WTC11 (cell line): ENCODE measurements at regions of chr16 and their contacts with region 1.

Region 1: DNA sequence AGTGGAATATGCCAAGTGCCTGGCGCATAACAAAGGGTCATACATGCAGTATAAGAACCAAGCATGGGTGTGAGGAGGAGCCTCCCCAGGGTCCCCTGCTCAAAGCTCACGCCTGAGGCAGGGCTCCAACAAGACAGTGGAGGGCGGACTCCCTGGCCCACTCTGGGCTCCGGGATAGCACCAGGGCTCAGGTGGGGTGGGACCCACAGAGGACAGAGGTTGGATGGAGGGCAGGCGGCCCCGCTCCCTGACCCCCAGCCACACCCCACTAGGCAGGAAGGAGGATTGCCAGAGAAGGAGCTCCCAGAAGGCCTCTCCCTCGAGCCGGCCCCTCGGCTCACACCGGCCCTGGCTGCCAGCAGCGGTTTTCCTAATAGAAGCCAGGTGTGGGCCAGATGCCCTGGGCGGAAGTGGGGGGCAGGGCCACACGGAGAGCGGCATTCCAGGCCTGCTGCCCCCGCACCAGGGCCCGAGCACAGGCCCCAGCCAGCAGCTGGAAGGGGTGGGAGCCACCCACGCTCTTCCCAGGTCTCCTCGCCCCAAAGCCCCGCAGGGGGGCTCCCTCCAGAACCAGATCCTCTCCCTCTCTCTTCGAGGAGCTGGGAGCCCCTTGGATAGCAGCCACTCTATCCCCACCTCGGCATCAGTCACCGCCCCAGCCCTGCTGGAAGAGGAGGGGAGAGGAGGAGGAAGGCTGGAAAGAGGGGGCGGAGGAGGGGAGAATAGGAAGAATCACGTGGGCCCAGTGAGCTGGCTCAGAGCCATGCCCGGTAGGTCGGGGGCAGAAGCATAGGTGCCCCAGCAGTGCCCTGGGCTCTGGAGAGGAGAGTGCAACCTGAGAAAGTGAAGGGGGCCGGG is 21.0 kb downstream of the VASN start:
- DNase-seq: peak; percentile 81
- ATAC-seq: peak; percentile 76
- H3K4me3 Mint-ChIP-seq: peak overlapping the region; percentile 20; the same call in 1 of the 2 replicates
- H3K27ac Mint-ChIP-seq: peak overlapping the region; percentile 92
- H3K4me1 Mint-ChIP-seq: peaks cover 48% of the 10 kb centered on the region
- H3K27me3 Mint-ChIP-seq: no peaks in the 10 kb centered on the region
- CTCF ChIP-seq: no peak

Region 2: GRCh38 chr16:4371357-4372000 is 21.1 kb before region 1 on chr16 and contains the start of gene VASN:
- CTCF ChIA-PET with region 1: interaction called, 65 read pairs
- POLR2A ChIA-PET with region 1: interaction called, 16 read pairs
- DNase-seq: peak; percentile 83
- ATAC-seq: peak; percentile 77
- H3K4me3 Mint-ChIP-seq: peak within 1 kb of the TSS; percentile 83
- H3K27ac Mint-ChIP-seq: no peak within 1 kb of the TSS
- H3K4me1 Mint-ChIP-seq: peaks cover 25% of the 10 kb centered on the region
- H3K27me3 Mint-ChIP-seq: no peaks in the 10 kb centered on the region
- CTCF ChIP-seq: no peak
- total RNA-seq, gene VASN: 8.0 to 9.1 TPM (median 8.3 TPM) in 3 replicates

Region 3: DNA sequence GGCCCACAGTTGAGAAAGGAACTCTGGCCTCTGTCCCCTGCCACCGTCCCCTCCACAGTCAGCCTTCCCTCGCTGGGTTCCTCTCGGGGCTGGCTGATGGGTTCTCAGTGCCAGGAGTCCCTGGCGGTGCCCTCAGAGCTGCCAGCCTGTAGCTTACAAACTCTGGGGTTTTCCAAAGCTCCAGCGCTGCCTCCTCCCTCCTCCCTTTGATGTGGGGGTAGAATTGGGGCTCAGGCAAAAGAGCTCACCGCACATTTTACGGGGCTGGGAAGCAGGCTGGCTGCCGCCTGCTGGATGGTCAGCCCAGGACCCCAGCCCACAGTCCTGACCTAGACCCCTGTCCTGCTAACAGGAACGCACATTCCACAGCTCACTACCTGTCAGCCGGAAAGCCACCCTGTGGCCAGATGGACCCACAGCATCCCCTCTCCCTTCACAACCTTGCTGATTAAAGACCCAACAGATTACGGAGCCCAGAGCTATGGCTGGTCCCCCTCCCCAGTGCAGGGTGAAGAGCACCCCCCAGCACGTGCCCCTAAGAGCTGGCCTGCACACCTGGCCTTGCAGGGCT is 15.0 kb before region 1 on chr16:
- CTCF ChIA-PET with region 1: interaction called, 85 read pairs
- POLR2A ChIA-PET with region 1: interaction called, 25 read pairs
- DNase-seq: no peak
- ATAC-seq: peak; percentile 46
- H3K4me3 Mint-ChIP-seq: no peak overlapping the region
- H3K27ac Mint-ChIP-seq: peak overlapping the region; percentile 64
- H3K4me1 Mint-ChIP-seq: peaks cover 47% of the 10 kb centered on the region
- H3K27me3 Mint-ChIP-seq: no peaks in the 10 kb centered on the region
- CTCF ChIP-seq: no peak

Region 4: GRCh38 chr16:4425378-4426020 is 32.9 kb after region 1 on chr16 and contains the start of gene DNAJA3:
- CTCF ChIA-PET with region 1: no interaction called
- POLR2A ChIA-PET with region 1: no interaction called
- DNase-seq: peak; percentile 91
- ATAC-seq: peak; percentile 92
- H3K4me3 Mint-ChIP-seq: peak within 1 kb of the TSS; percentile 95
- H3K27ac Mint-ChIP-seq: peak within 1 kb of the TSS; percentile 100
- H3K4me1 Mint-ChIP-seq: peaks cover 18% of the 10 kb centered on the region
- H3K27me3 Mint-ChIP-seq: no peaks in the 10 kb centered on the region
- CTCF ChIP-seq: no peak
- total RNA-seq, gene DNAJA3: 54.8 to 64.1 TPM (median 56.0 TPM) in 3 replicates